ENCODE measurements at regions of chr1 and their contacts with region 1.

Region 1: DNA sequence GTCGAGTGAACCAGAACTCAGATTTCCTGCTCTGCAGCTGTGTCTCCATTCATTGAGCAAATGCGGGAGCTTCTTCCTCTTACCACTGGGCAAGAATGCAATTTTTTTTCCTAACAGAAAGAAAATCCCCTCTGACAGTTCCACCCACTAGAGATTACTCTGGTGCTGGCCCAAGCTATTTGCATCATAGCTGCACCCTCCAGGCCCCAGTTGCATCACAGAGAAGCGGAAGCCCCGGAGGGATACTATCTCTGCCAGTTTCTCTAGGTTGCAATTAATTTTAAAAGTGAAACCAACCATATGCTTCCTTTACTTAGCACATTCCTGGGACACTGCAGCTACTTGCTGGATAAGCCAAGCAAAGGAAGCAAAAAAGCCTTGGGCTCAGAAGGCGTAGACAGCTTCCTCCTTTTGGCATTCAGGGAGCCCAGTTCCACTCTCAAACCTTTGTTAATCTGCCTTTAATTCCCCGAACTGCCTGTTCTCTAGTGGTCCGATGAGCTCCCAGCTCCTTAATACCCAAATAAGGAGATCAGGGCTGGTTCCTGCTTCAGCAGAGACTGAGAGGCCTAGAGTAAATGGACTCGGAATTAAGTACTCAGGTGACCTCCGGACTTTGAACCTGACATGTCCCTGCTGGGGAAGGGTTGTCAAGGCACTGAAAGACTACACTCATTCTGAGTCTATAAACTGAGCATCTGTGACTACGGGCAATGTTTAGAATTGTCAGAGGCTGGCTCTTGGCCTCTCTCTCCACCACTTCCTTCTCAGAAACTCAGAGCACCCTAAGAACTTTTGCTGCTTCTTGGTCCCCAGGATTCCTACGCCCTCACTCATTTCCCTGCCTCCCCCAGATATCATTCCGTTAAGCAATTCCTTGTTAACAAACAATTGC is 72.5 kb upstream of the TNFSF18 start:
- DNase-seq: peak; percentile 82

Region 2: DNA sequence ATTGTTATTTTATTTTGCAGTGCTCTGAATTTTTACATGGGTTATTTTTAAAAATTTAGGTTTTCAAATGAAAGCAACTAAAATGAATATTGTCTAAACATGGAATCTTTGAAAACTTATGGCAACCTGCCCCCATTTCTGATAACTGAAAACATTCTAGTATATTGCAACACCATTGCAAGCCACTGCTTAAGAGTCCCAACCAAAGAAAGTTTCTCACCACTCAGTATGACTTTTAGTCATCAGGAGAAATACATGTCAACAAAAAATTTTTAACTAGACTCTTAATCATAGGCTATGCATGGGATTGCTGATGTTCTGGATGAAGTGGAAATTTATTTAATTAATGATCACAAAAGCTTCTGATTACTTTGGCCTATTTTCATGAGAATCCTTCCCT is 184.5 kb before region 1 on chr1:
- intact Hi-C with region 1: loop called (anchors 10 kb)
- DNase-seq: no peak

Region 3: GRCh38 chr1:173043253-173043652 is 80.0 kb before region 1 on chr1:
- intact Hi-C with region 1: no loop called
- DNase-seq: no peak